ENCODE measurements at regions of chr5 and their contacts with region 1.

Region 1: DNA sequence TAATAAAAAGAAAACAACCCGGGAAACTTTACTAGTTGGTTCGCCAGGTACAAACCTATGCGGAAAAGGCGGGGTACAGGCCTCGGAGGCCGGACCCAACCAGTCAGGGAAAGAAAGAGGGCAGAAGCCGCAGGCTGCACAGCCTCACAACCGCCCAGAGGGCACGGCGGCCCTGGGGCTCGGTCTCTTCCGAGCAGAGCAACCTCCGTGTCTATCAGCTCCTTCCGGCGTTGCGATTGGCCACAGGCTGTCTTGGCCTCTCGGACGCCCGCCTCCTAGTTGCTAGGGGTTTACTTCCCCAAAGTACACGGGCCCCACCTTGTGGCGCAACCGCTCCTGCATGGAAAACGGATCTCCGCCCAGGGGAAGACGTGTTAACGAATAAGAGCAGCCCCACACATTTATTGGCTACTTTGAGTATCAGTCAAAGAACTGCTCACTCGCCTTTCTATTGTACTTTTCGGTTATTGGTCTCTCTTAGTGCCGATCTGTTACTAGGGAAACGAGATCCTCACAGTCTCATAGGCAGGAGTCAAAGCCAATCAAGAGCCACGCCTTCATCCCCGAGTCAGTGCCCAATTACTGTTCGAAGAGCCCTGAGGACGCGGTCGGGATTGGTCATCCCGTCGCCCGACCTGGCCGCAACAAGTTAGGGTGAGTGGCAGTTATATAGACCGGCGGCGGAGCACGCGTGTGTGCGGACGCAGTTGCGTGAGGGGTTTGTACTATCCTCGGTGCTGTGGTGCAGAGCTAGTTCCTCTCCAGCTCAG is at the start of gene G3BP1:
- DNase-seq: peak; percentile 100
- ATAC-seq: peak; percentile 94
- total RNA-seq, gene G3BP1: 114 TPM

Region 2: GRCh38 chr5:151719228-151720000 is 52.0 kb before region 1 on chr5:
- intact Hi-C with region 1: no loop called
- DNase-seq: no peak
- ATAC-seq: peak; percentile 72

Region 3: DNA sequence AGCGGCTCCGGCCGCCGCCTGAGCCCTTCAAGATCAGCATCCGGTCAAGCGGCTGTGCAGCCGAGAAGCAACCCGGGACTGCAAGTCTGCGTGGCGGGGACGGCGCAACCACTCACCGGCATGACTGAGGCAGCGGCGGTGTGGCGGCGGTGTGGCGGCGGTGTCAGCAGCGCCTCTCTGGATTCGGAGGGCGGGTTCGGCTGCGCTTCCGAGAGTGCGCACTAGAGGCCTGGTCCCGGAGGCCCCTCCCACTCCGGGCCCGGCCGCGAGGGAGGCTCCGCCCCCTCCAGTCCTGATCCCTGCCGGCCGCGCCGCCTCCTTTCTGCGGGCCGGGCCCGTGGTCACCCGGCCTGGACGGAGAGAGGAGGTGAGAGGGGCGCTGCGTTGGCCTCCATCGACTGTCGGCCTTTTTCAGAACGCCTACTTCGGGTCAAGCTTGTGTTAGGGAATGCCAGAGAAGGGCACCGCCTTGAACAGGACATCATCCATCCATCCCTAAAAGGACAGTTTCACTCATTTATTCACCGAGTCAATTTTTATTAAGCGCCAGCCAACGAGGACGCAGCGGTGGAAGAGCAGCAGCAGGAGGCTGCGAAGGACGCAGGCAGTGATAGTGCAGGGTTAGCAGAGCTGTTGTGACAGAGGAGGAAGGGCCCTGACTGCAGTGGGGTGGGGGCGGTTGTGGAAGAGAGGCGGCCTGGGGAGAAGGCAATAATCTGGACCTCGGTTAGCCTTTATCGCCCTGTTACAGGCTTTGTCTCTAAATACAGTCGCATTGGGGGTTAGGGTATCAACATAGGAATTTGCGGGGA is 12.8 kb before region 1 on chr5 and contains the start of gene ATOX1:
- intact Hi-C with region 1: loop called (anchors 1 kb)
- DNase-seq: peak; percentile 97
- ATAC-seq: peak; percentile 99
- total RNA-seq, gene ATOX1: 69.5 TPM